GM12878 (cell line): ENCODE measurements at regions of chr2 and their contacts with region 1.

Region 1: GRCh38 chr2:73828818-73829570 is at the start of gene STAMBP:
- DNase-seq: peak; percentile 87
- ATAC-seq: peak; percentile 89
- H3K4me3 ChIP-seq: peak within 1 kb of the TSS; percentile 96
- H3K27ac ChIP-seq: peak within 1 kb of the TSS; percentile 94
- H3K4me1 ChIP-seq: peaks cover 7% of the 10 kb centered on the region; the same call in 1 of the 2 replicates
- H3K27me3 ChIP-seq: no peaks in the 10 kb centered on the region
- CTCF ChIP-seq: no peak
- EP300 ChIP-seq: no peak
- POLR2A ChIP-seq: peak; percentile 80
- RAD21 ChIP-seq: no peak
- polyA plus RNA-seq, gene STAMBP: 67.3 to 72.2 TPM

Region 2: DNA sequence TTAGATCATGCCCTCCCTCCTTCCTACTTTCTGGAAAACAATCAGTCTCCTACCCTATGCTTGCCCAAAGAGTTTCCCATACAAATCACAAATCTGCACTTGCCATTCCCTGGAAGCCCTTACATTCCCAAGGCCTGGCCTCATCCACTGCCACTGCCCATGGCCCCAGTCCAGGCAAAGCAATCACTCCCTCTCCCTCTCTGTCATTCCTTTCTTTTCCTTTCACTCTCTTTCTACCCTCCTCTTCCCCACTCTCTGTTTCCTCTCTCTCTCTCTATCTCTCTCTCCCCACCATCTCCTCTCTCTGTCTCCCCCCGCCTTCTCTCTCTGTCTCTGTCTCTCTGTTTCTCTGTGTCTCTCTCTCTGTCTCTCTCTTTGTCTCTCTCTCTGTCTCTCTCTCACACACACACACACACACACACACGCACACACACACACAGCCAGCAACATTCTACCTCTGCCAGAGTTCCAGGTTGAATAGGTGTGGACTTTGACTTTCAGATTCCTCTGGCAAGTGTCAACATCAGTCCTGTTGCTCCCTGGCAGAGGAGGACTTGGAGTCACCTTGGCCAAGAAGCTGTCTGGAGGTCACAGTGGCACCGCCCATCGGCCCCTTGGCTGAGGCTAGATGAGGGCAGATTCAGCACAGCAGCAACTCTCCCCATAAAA is 143.1 kb before region 1 on chr2:
- CTCF ChIA-PET with region 1: interaction called, 7 read pairs
- POLR2A ChIA-PET with region 1: no interaction called
- RAD21 ChIA-PET with region 1: no interaction called
- SMC1A ChIA-PET with region 1: interaction called, 3 read pairs
- in situ Hi-C with region 1: no loop called
- intact Hi-C with region 1: loop called (anchors 10 kb)
- DNase-seq: no peak
- ATAC-seq: no peak
- H3K4me3 ChIP-seq: no peak overlapping the region
- H3K27ac ChIP-seq: no peak overlapping the region
- H3K4me1 ChIP-seq: no peaks in the 10 kb centered on the region
- H3K27me3 ChIP-seq: no peaks in the 10 kb centered on the region
- CTCF ChIP-seq: no peak
- EP300 ChIP-seq: no peak
- POLR2A ChIP-seq: no peak
- RAD21 ChIP-seq: no peak

Region 3: DNA sequence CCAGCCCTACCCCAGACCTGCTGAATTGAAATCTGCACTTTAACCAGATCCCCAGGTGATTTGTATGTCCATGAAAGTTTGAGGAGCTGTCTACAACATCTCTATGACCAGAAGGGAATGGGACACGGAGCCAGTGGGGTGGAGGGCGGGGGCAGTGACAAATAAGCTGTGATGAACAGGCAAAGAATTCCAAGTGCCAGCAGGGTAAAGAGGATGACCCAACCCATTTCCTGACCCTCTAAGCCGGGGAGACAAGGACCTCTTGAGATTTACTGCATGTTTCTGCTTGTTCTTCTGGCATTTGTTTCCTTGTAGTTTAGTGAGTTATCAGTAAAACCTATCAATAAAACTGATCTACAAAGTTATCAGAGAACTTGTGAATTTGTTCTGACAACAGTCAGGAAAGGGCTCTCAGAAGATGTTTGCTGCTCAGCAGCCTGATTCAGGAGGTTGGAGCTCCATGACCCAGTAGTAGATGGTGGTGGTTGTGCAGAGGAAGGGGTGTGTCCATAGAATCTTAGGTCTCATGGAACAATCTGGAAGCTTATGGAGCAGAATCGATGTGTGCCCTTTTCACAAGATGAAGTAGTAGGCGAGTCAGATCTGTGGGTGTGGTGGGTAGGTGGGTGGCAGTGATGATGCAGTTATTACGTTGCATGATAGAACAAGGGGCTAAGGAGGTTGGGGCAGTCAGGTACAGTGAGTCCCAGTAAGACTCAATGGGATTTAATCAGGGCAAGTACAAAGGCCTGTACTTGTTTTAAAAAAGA is 164.6 kb after region 1 on chr2:
- CTCF ChIA-PET with region 1: interaction called, 57 read pairs
- POLR2A ChIA-PET with region 1: interaction called, 4 read pairs
- RAD21 ChIA-PET with region 1: interaction called, 96 read pairs
- SMC1A ChIA-PET with region 1: interaction called, 46 read pairs
- in situ Hi-C with region 1: no loop called
- intact Hi-C with region 1: loop called (anchors 10 kb)
- DNase-seq: no peak
- ATAC-seq: peak; percentile 5
- H3K4me3 ChIP-seq: peak overlapping the region; percentile 21; the same call in 1 of the 2 replicates
- H3K27ac ChIP-seq: no peak overlapping the region; the same call in 1 of the 2 replicates
- H3K4me1 ChIP-seq: peaks cover 27% of the 10 kb centered on the region
- H3K27me3 ChIP-seq: no peaks in the 10 kb centered on the region
- CTCF ChIP-seq: no peak
- EP300 ChIP-seq: no peak
- POLR2A ChIP-seq: no peak
- RAD21 ChIP-seq: no peak

Region 4: DNA sequence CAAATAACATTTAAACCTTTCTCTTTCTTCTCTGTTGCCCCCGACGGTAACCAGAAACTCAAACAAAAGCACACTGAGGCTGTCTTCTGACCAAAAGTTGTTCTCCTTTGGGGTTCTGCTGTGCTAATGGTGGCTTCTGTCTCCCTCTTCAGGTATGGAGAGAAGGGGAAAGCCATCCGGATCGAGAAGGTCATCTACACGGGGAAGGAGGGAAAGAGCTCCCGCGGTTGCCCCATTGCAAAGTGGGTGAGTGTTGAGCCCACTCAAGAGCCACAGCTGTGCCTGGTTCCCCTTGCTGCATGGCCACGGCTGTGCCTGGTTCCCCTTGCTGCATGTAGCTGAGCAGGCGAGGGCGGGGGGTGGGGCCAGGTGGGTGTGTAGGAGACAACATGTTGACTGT is 251.4 kb after region 1 on chr2:
- CTCF ChIA-PET with region 1: interaction called, 20 read pairs
- POLR2A ChIA-PET with region 1: interaction called, 3 read pairs
- RAD21 ChIA-PET with region 1: interaction called, 12 read pairs
- SMC1A ChIA-PET with region 1: interaction called, 53 read pairs
- in situ Hi-C with region 1: no loop called
- intact Hi-C with region 1: loop called (anchors 10 kb)
- DNase-seq: no peak
- ATAC-seq: peak; percentile 39
- H3K4me3 ChIP-seq: no peak overlapping the region
- H3K27ac ChIP-seq: peak overlapping the region; percentile 57
- H3K4me1 ChIP-seq: peaks cover 17% of the 10 kb centered on the region
- H3K27me3 ChIP-seq: no peaks in the 10 kb centered on the region
- CTCF ChIP-seq: peak; percentile 23 to 58 (median 28); a peak in 4 of 6 replicates
- EP300 ChIP-seq: peak in 1 of 2 experiments; percentile 7; a peak in 1 of 4 replicates
- POLR2A ChIP-seq: peak; percentile 30; the same call in 1 of the 2 replicates
- RAD21 ChIP-seq: peak; percentile 78

Region 5: GRCh38 chr2:74147727-74148456 is 318.9 kb after region 1 on chr2 and contains the start of gene BOLA3:
- CTCF ChIA-PET with region 1: interaction called, 191 read pairs
- POLR2A ChIA-PET with region 1: interaction called, 10 read pairs
- RAD21 ChIA-PET with region 1: interaction called, 51 read pairs
- SMC1A ChIA-PET with region 1: interaction called, 50 read pairs
- in situ Hi-C with region 1: no loop called
- intact Hi-C with region 1: loop called (anchors 1 kb)
- DNase-seq: peak; percentile 32
- ATAC-seq: peak; percentile 97
- H3K4me3 ChIP-seq: peak within 1 kb of the TSS; percentile 89
- H3K27ac ChIP-seq: peak within 1 kb of the TSS; percentile 60
- H3K4me1 ChIP-seq: peaks cover 7% of the 10 kb centered on the region
- H3K27me3 ChIP-seq: no peaks in the 10 kb centered on the region
- CTCF ChIP-seq: peak; percentile 66 to 88 (median 67)
- EP300 ChIP-seq: no peak
- POLR2A ChIP-seq: peak; percentile 89
- RAD21 ChIP-seq: peak; percentile 48
- polyA plus RNA-seq, gene BOLA3: 164 to 168 TPM

Region 6: DNA sequence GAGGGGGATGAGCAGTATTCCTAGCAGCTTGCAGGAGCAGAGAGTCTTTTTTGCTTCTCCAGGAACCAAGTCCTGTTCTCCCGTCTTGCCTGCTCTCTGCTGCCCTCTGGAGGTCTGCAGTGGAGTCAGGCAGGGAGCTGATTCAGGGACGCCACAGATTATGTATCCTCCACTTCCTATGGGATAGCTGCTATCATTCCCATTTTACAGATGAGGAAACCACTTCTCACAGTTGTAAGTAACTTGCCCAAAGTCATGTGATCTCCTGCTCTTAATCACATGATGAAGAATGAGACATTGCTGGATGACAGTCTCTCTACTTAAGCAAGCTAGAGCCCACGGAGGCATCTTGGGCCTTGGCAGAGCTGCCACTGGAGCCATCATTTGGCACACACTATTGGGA is 505.9 kb after region 1 on chr2:
- CTCF ChIA-PET with region 1: interaction called, 48 read pairs
- POLR2A ChIA-PET with region 1: interaction called, 3 read pairs
- RAD21 ChIA-PET with region 1: interaction called, 16 read pairs
- SMC1A ChIA-PET with region 1: interaction called, 24 read pairs
- in situ Hi-C with region 1: no loop called
- intact Hi-C with region 1: loop called (anchors 10 kb)
- DNase-seq: peak; percentile 17
- ATAC-seq: peak; percentile 95
- H3K4me3 ChIP-seq: no peak overlapping the region
- H3K27ac ChIP-seq: no peak overlapping the region
- H3K4me1 ChIP-seq: no peaks in the 10 kb centered on the region
- H3K27me3 ChIP-seq: no peaks in the 10 kb centered on the region
- CTCF ChIP-seq: peak; percentile 88 to 97 (median 89)
- EP300 ChIP-seq: no peak
- POLR2A ChIP-seq: no peak
- RAD21 ChIP-seq: peak; percentile 90